Breast epithelium (tissue), 4 donors: ENCODE measurements at regions of chr4 and their contacts with region 1.

Region 1: GRCh38 chr4:139484783-139485318 is 30.9 kb downstream of the RAB33B start:
- DNase-seq: no peak
- H3K4me3 ChIP-seq: no peak overlapping the region
- H3K27ac ChIP-seq: no peak overlapping the region
- H3K4me1 ChIP-seq: no peaks in the 10 kb centered on the region
- H3K27me3 ChIP-seq: no peaks in the 10 kb centered on the region
- CTCF ChIP-seq: no peak
- POLR2A ChIP-seq: no peak

Region 2: GRCh38 chr4:137819964-137820383 is 1664.9 kb before region 1 on chr4:
- intact Hi-C with region 1: no loop called
- DNase-seq: no peak
- H3K4me3 ChIP-seq: no peak overlapping the region
- H3K27ac ChIP-seq: no peak overlapping the region
- H3K4me1 ChIP-seq: no peaks in the 10 kb centered on the region
- H3K27me3 ChIP-seq: no peaks in the 10 kb centered on the region
- CTCF ChIP-seq: peak in 2 of 3 donors; percentile 38 to 48
- POLR2A ChIP-seq: no peak

Region 3: DNA sequence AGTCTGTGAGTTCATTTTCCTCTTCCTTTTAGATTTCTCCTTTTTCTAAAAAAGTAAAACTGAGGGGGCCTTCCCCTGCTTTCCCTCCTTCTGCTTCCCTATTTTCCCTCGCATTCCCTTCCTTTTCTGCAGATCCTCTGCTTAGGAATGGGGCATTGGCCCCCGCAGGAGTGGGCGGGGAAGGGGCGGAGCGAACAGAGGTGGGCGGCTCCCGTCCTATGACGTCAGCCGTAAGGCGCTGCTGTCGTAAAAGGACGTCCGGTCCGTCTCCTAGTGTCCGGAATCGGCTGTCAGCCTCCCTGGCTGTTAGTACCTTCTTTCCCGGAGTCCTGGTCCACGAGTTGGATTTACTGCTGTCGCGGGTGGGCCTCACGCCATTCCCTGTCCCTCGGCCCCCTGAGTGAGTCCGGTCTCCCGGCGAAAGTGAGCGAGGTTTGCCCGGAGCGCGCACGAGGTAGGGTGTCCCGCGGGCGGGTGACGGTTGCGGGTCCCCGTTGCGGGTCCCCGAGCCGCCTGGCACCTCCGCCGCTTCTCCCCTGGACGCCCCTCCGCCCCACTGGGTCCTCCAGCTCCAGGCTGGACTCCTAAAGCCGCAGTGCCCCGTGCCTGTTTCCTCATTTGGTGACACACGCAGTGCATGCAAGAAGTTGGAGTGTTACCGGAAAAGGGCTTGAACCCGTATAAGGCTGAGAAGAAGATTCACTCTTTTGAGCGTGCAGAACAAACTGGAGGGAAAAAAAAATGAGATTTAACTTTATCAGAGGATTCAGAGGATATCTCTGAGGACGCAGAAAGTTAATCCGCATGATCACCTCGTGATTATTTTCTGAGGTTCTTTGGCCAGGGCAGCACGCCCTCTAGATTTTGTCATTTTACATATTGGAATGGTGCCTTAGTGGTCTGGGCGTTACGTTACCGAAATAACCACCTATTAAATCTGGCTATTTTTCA is 1736.1 kb after region 1 on chr4 and contains the start of gene ZNF330:
- intact Hi-C with region 1: loop called (anchors 5 kb)
- DNase-seq: peak; percentile 84 to 91
- H3K4me3 ChIP-seq: peak within 1 kb of the TSS; percentile 73 to 96 (median 87)
- H3K27ac ChIP-seq: peak within 1 kb of the TSS; percentile 93 to 96
- H3K4me1 ChIP-seq: no peaks in the 10 kb centered on the region
- H3K27me3 ChIP-seq: no peaks in the 10 kb centered on the region
- CTCF ChIP-seq: peak in 1 of 3 donors; percentile 7
- POLR2A ChIP-seq: peak; percentile 93
- total RNA-seq, gene ZNF330: 27.5 to 68.0 (median 38.3) TPM